ENCODE measurements at regions of chr9 and their contacts with region 1.

Region 1: DNA sequence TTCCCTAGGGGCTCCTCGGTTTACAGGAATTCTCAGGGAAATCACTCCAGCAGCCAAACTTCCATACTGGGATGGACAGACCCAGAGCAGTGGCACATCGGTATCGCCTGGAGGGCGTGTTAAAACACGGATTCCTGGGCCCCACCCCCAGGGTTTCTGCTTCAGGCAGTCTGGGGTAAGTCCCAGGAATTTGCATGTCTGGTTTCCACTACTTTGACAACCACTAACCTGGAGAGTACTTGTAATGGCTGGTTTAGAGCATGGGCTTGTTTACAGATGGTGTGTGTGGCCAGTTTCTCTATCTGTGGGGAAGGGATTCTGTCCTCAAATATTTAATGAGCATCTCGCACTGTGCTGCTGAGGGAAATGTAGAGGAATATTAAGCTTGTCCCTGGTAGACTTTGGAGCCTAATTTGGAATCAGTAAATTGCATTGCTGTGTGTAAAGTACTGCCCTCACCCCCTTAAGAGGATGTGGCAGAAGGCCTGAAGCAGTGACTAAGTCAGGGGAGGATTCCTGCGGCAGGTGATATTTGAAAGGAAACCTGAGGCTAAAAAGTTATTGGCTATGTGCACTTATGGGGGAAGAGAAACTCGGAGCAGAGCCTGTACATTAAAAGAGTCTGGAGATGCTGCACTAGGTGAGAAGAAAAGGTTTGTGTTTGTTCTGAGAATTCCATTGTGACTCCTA is 18.6 kb upstream of the TJP2 start:
- DNase-seq: no peak
- H3K4me3 ChIP-seq: no peak overlapping the region
- H3K4me3 Mint-ChIP-seq: no peak overlapping the region
- H3K27ac ChIP-seq: no peak overlapping the region
- H3K27ac Mint-ChIP-seq: no peak overlapping the region
- H3K4me1 ChIP-seq: no peaks in the 10 kb centered on the region
- H3K4me1 Mint-ChIP-seq: no peaks in the 10 kb centered on the region
- H3K27me3 ChIP-seq: no peaks in the 10 kb centered on the region
- H3K27me3 Mint-ChIP-seq: no peaks in the 10 kb centered on the region
- CTCF ChIP-seq: no peak

Region 2: GRCh38 chr9:69190086-69190862 is 34.8 kb after region 1 on chr9:
- intact Hi-C with region 1: loop called (anchors 2 to 5 kb)
- DNase-seq: no peak
- H3K4me3 ChIP-seq: no peak overlapping the region
- H3K4me3 Mint-ChIP-seq: no peak overlapping the region
- H3K27ac ChIP-seq: no peak overlapping the region
- H3K27ac Mint-ChIP-seq: no peak overlapping the region
- H3K4me1 ChIP-seq: peaks cover 0 to 6% of the 10 kb centered on the region in 2 donors
- H3K4me1 Mint-ChIP-seq: peaks cover 12% of the 10 kb centered on the region
- H3K27me3 ChIP-seq: no peaks in the 10 kb centered on the region
- H3K27me3 Mint-ChIP-seq: no peaks in the 10 kb centered on the region
- CTCF ChIP-seq: no peak

Region 3: GRCh38 chr9:69199769-69200470 is 44.4 kb after region 1 on chr9:
- intact Hi-C with region 1: loop called in 1 of 2 experiments (anchors 5 kb)
- DNase-seq: peak in 1 of 3 donors; percentile 45
- H3K4me3 ChIP-seq: no peak overlapping the region
- H3K4me3 Mint-ChIP-seq: no peak overlapping the region
- H3K27ac ChIP-seq: no peak overlapping the region
- H3K27ac Mint-ChIP-seq: peak overlapping the region in 1 of 7 donors; percentile 38
- H3K4me1 ChIP-seq: peaks cover 5 to 9% of the 10 kb centered on the region in 2 donors
- H3K4me1 Mint-ChIP-seq: peaks cover 10% of the 10 kb centered on the region
- H3K27me3 ChIP-seq: no peaks in the 10 kb centered on the region
- H3K27me3 Mint-ChIP-seq: no peaks in the 10 kb centered on the region
- CTCF ChIP-seq: no peak

Measured in CD14-positive monocyte (primary cell).